Thyroid gland (tissue), 4 donors: ENCODE measurements at regions of chr3 and their contacts with region 1.

Region 1: DNA sequence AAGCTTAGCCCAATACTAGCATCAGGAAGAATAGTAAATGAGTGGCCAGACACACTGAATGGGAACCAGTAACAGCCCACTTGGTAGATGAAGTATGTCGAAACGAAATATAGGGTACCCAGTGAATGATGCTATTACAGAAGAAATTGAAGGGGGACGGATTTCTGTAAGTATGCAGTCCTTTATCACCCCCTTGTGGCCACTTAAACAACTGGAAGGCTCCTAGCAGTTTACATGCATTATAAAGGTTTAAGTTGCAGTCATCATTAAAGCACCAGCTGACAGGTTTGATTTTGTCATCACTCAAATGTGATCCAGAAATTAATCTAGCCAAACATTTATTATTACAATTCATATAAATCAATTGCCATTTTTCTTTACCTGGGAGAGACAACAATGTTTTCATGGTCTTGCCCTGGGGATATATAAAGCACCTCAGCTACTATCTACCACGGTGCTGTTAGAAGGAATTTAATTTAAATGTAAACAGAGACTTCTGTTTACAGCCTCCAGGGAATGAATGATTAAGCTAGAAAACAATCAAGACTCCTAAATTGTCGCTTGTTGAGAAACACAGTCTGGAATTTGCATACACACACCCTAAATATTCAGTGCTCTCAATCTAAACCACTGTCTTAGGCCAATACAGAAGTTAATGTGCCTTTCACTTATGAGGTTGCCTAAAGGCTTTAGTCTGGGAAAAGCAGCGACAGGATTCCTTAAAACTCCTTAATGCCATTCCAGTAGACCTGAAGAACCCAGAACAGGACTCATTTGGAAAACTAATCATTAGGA is 7.8 kb downstream of the EIF1B start:
- DNase-seq: peak; percentile 17 to 28
- H3K4me3 ChIP-seq: no peak overlapping the region
- H3K27ac ChIP-seq: no peak overlapping the region
- H3K4me1 ChIP-seq: no peaks in the 10 kb centered on the region
- H3K27me3 ChIP-seq: no peaks in the 10 kb centered on the region
- CTCF ChIP-seq: peak; percentile 51 to 82 (median 66)
- POLR2A ChIP-seq: no peak

Region 2: GRCh38 chr3:40152482-40153133 is 164.7 kb before region 1 on chr3:
- intact Hi-C with region 1: no loop called
- DNase-seq: no peak
- H3K4me3 ChIP-seq: no peak overlapping the region
- H3K27ac ChIP-seq: no peak overlapping the region
- H3K4me1 ChIP-seq: no peaks in the 10 kb centered on the region
- H3K27me3 ChIP-seq: no peaks in the 10 kb centered on the region
- CTCF ChIP-seq: no peak
- POLR2A ChIP-seq: no peak

Region 3: GRCh38 chr3:40191850-40192448 is 125.3 kb before region 1 on chr3:
- intact Hi-C with region 1: loop called (anchors 5 kb)
- DNase-seq: peak; percentile 55 to 58
- H3K4me3 ChIP-seq: no peak overlapping the region
- H3K27ac ChIP-seq: no peak overlapping the region
- H3K4me1 ChIP-seq: peaks cover 2 to 3% of the 10 kb centered on the region in 2 donors
- H3K27me3 ChIP-seq: no peaks in the 10 kb centered on the region
- CTCF ChIP-seq: peak; percentile 60 to 94 (median 74)
- POLR2A ChIP-seq: no peak

Region 4: GRCh38 chr3:40464339-40465110 is 147.3 kb after region 1 on chr3:
- intact Hi-C with region 1: loop called (anchors 10 kb)
- DNase-seq: no peak
- H3K4me3 ChIP-seq: no peak overlapping the region
- H3K27ac ChIP-seq: no peak overlapping the region
- H3K4me1 ChIP-seq: no peaks in the 10 kb centered on the region
- H3K27me3 ChIP-seq: no peaks in the 10 kb centered on the region
- CTCF ChIP-seq: no peak
- POLR2A ChIP-seq: no peak

Region 5: DNA sequence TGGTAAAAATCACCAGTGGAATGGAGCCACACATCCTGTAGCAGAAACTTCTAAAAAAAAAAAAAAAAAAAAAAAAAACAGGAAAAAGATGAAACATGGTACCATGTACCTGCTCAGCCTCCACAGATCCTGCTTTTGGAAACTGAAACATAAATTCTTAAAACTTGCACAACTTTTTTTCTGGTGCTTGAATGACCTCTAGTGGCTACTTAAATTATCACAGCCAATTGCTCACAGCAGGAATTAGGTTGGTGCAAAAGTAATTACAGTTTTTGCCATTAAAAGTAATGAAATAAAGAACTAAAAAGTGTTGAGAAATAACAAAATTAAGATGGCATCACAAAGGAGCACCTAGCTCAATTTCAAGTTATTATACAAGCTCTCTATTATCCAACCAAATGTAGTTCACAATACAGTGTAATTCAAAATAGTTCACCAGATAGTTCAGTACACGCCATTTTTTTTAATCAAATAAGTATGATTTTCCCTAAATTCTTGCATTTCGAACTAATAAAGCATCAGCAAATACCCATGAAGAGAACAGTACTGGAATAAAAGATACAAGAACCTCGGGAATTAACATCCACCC is 1564.1 kb after region 1 on chr3:
- intact Hi-C with region 1: loop called (anchors 10 kb)
- DNase-seq: no peak
- H3K4me3 ChIP-seq: no peak overlapping the region
- H3K27ac ChIP-seq: no peak overlapping the region
- H3K4me1 ChIP-seq: peaks cover 4 to 7% of the 10 kb centered on the region in 2 donors
- H3K27me3 ChIP-seq: no peaks in the 10 kb centered on the region
- CTCF ChIP-seq: peak; percentile 50 to 86 (median 60)
- POLR2A ChIP-seq: no peak